ENCODE measurements at regions of chr3 and their contacts with region 1.

Region 1: GRCh38 chr3:85397434-85397833 is 438.6 kb downstream of the CADM2 start:
- DNase-seq: no peak
- ATAC-seq: no peak
- H3K4me3 ChIP-seq: no peak overlapping the region
- H3K27ac ChIP-seq: no peak overlapping the region
- H3K4me1 ChIP-seq: no peaks in the 10 kb centered on the region
- H3K27me3 ChIP-seq: no peaks in the 10 kb centered on the region
- CTCF ChIP-seq: no peak
- POLR2A ChIP-seq: no peak
- RAD21 ChIP-seq: no peak

Region 2: DNA sequence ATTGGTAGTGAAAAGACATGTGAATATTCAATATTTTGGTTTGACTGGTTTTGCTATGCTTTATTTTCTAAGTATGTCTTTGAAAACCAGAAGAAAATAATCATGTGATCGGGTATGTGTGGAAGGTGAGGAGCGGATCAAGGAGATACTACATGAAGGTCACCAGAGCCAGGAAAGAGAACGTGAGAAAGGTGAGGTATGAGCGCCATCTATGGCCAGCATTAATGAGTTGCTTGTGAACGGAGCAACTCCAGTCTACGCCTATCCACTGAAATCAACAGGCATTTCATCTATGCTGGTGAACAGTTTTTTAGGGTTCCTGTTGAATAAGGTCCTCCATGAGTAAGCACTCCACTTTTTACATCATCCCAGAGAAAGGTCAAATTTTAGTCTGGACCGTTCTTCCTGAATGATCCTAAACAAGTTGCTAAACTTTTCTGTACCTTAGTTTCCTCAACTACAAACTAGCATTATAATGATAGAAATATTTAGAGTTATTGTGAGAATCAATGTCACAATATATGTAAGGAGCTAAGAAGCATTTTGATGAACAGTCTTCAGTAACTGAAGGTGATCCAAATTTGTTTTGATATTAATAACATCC is 1873.9 kb before region 1 on chr3:
- CTCF ChIA-PET with region 1: no interaction called
- POLR2A ChIA-PET with region 1: no interaction called
- RAD21 ChIA-PET with region 1: no interaction called
- intact Hi-C with region 1: no loop called
- DNase-seq: no peak
- ATAC-seq: no peak
- H3K4me3 ChIP-seq: no peak overlapping the region
- H3K27ac ChIP-seq: no peak overlapping the region
- H3K4me1 ChIP-seq: no peaks in the 10 kb centered on the region
- H3K27me3 ChIP-seq: no peaks in the 10 kb centered on the region
- CTCF ChIP-seq: 0 out of 6 replicates have a peak, but pooled peaks of 1 of the 3 experiments have one; percentile 9
- POLR2A ChIP-seq: no peak
- RAD21 ChIP-seq: no peak

Region 3: DNA sequence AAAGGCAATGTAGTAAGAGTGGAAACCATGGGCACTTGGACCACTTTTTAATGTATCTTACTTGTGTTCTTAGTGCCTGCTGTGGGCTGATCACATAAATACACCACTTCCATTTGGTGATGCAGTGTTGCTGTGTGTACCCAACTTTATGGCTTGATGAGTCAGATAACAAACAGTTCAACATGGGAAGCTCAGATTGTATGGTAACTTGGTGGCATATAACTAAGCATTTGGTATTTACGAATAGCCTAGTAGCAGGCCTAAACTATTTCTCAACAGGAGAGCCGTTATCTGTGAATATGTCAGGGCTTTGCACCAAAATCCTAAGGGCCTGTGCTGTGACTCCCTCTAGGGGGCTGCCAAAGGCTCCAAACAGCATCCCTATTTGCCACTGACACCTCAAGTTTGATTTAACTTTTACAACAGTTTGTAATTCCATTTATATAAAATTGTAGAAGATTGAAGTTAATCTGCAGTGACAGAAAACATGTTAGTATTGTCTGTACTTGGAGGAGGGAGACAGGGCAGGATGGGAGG is 1079.1 kb before region 1 on chr3:
- CTCF ChIA-PET with region 1: no interaction called
- POLR2A ChIA-PET with region 1: no interaction called
- RAD21 ChIA-PET with region 1: no interaction called
- intact Hi-C with region 1: loop called (anchors 5 kb)
- DNase-seq: no peak
- ATAC-seq: no peak
- H3K4me3 ChIP-seq: no peak overlapping the region
- H3K27ac ChIP-seq: no peak overlapping the region
- H3K4me1 ChIP-seq: no peaks in the 10 kb centered on the region
- H3K27me3 ChIP-seq: no peaks in the 10 kb centered on the region
- CTCF ChIP-seq: no peak
- POLR2A ChIP-seq: no peak
- RAD21 ChIP-seq: no peak

Region 4: GRCh38 chr3:87272718-87273341 is 1875.4 kb after region 1 on chr3:
- CTCF ChIA-PET with region 1: no interaction called
- POLR2A ChIA-PET with region 1: no interaction called
- RAD21 ChIA-PET with region 1: no interaction called
- intact Hi-C with region 1: no loop called
- DNase-seq: no peak
- ATAC-seq: no peak
- H3K4me3 ChIP-seq: no peak overlapping the region
- H3K27ac ChIP-seq: no peak overlapping the region
- H3K4me1 ChIP-seq: no peaks in the 10 kb centered on the region
- H3K27me3 ChIP-seq: no peaks in the 10 kb centered on the region
- CTCF ChIP-seq: no peak
- POLR2A ChIP-seq: no peak
- RAD21 ChIP-seq: no peak